A673 (cell line): ENCODE measurements at regions of chr7 and their contacts with region 1.

Region 1: GRCh38 chr7:67625257-67625737 is 628.7 kb downstream of the TYW1 start:
- DNase-seq: peak; percentile 91
- H3K4me3 ChIP-seq: peak overlapping the region; percentile 35
- H3K27ac ChIP-seq: no peak overlapping the region
- H3K4me1 ChIP-seq: peaks cover 7% of the 10 kb centered on the region
- H3K27me3 ChIP-seq: no peaks in the 10 kb centered on the region
- CTCF ChIP-seq: peak; percentile 93

Region 2: GRCh38 chr7:67371429-67372305 is 253.6 kb before region 1 on chr7:
- CTCF ChIA-PET with region 1: no interaction called
- POLR2A ChIA-PET with region 1: no interaction called
- intact Hi-C with region 1: loop called (anchors 10 kb)
- DNase-seq: peak; percentile 85
- H3K4me3 ChIP-seq: no peak overlapping the region
- H3K27ac ChIP-seq: no peak overlapping the region
- H3K4me1 ChIP-seq: no peaks in the 10 kb centered on the region
- H3K27me3 ChIP-seq: peaks cover 2% of the 10 kb centered on the region
- CTCF ChIP-seq: peak; percentile 87

Region 3: GRCh38 chr7:67637027-67637358 is 11.7 kb after region 1 on chr7:
- CTCF ChIA-PET with region 1: interaction called, 19 read pairs
- POLR2A ChIA-PET with region 1: no interaction called
- intact Hi-C with region 1: no loop called
- DNase-seq: peak; percentile 22
- H3K4me3 ChIP-seq: no peak overlapping the region
- H3K27ac ChIP-seq: no peak overlapping the region
- H3K4me1 ChIP-seq: no peaks in the 10 kb centered on the region
- H3K27me3 ChIP-seq: no peaks in the 10 kb centered on the region
- CTCF ChIP-seq: peak; percentile 47; the same call in 1 of the 2 replicates

Region 4: GRCh38 chr7:67918158-67918557 is 292.9 kb after region 1 on chr7:
- CTCF ChIA-PET with region 1: no interaction called
- POLR2A ChIA-PET with region 1: no interaction called
- intact Hi-C with region 1: loop called (anchors 10 kb)
- DNase-seq: peak; percentile 91
- H3K4me3 ChIP-seq: no peak overlapping the region
- H3K27ac ChIP-seq: peak overlapping the region; percentile 78
- H3K4me1 ChIP-seq: peaks cover 17% of the 10 kb centered on the region
- H3K27me3 ChIP-seq: no peaks in the 10 kb centered on the region
- CTCF ChIP-seq: no peak

Region 5: DNA sequence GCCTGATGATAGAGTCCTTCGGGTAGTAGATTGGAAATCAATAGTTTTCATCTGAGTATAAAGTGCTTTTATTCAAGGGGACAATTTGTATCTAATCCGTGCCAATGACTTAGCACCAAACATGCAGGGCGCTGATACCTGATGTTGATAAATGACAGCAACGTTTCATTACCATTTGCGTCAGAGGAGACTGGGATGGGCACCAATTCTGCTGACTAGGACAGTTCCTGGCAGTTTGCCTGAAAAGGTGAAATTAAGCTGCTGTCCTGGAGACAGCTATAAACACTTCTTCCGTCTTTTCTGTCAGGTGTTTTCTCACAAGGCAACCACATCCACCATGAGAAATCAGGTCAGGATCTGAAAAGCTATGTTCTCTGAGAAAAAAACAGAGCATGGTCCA is 507.7 kb after region 1 on chr7:
- CTCF ChIA-PET with region 1: no interaction called
- POLR2A ChIA-PET with region 1: no interaction called
- intact Hi-C with region 1: no loop called
- DNase-seq: no peak
- H3K4me3 ChIP-seq: no peak overlapping the region
- H3K27ac ChIP-seq: no peak overlapping the region
- H3K4me1 ChIP-seq: no peaks in the 10 kb centered on the region
- H3K27me3 ChIP-seq: no peaks in the 10 kb centered on the region
- CTCF ChIP-seq: no peak

Region 6: DNA sequence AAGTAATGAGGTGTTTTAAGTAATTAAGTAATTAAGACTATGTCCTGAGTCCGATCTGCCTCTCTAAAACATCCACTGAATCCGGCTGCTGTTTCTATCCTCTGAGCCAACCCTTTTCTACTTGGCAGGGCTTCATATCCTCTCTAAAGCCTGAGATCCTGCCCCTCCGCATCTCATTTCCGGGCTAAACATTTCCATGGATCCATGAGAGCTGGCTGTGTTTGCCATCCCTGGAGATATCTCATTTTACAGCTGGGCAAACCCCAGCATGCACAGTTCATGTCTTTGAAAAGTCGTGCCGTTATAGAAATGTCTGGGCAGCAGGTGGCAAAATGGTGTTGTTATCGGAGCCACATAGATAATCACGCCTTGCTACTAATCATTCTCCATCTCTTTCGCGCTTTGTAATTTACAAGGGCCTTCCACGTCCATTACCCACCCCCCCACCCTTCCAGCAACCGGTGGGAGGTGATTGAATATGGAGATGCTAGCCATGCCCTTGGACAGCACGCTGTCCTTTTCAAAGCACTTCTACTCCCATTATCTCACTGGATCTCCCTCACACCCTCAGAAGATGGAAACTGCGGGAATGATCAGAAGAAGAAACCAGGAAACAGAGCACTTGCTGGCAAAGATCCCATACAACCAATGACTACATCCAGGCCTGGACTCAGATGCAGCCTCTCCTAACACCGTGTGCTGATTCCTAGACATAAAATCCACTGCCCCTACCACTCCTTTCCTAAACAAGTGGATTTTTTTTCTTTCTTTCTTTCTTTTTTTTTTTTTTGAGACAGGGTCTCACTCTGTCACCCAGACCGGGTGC is 560.5 kb after region 1 on chr7:
- CTCF ChIA-PET with region 1: no interaction called
- POLR2A ChIA-PET with region 1: interaction called, 14 read pairs
- intact Hi-C with region 1: no loop called
- DNase-seq: peak; percentile 88
- H3K4me3 ChIP-seq: no peak overlapping the region
- H3K27ac ChIP-seq: peak overlapping the region; percentile 24
- H3K4me1 ChIP-seq: peaks cover 7% of the 10 kb centered on the region
- H3K27me3 ChIP-seq: no peaks in the 10 kb centered on the region
- CTCF ChIP-seq: peak; percentile 30; the same call in 1 of the 2 replicates